ENCODE measurements at regions of chrX and their contacts with region 1.

Region 1: GRCh38 chrX:55160685-55161552 is 59.2 kb upstream of the PAGE5 start:
- DNase-seq: peak; percentile 96
- H3K4me3 Mint-ChIP-seq: peak overlapping the region; percentile 90
- H3K27ac Mint-ChIP-seq: peak overlapping the region; percentile 97
- H3K4me1 Mint-ChIP-seq: peaks cover 10% of the 10 kb centered on the region
- H3K27me3 Mint-ChIP-seq: peaks cover 13% of the 10 kb centered on the region

Region 2: DNA sequence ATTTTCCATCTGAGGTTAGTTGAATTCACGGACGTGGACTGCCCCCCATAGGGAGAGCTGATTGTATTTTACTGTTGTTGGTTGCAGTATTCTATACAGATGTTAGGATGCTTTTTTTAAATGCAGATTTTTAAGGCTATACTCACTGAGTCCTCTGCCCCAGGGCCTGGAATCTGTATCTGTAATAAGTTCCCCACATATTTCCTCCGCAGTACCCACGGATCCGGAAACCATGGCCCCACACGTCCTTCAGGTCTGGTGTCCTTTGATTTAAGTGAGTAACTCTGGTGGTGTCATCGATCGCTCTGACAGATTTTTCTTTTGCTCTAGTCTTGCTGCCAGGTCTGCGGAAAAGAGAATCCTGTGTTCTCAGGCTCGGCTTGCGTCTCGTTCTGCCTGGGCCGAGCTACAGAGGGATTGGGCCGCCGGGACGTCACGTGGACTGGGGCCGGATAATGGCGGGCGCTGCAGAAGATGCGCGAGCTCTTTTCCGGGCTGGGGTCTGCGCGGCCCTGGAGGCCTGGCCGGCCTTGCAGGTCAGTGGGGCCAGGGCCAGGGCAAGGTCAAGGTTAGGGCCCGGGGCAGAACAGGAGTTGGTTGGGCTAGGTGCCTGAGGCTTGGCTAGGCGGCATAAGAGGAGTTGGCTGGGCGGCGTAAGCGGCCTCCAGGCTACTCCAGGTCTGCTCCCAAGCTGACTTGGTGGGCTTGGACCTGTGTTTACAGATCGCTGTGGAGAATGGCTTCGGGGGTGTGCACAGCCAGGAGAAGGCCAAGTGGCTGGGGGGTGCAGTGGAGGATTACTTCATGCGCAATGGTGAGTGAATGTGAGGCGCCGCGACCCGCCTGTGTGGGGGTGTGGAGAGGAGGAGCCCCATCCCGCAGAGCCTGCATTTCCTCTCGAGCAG is 720.7 kb before region 1 on chrX and contains the start of gene TSR2:
- intact Hi-C with region 1: loop called (anchors 5 kb)
- DNase-seq: peak; percentile 93
- H3K4me3 Mint-ChIP-seq: peak within 1 kb of the TSS; percentile 96
- H3K27ac Mint-ChIP-seq: peak within 1 kb of the TSS; percentile 92
- H3K4me1 Mint-ChIP-seq: peaks cover 14% of the 10 kb centered on the region
- H3K27me3 Mint-ChIP-seq: no peaks in the 10 kb centered on the region
- total RNA-seq, gene TSR2: 40.8 and 43.7 TPM in 2 replicates

Region 3: GRCh38 chrX:54999717-55000598 is 161.0 kb before region 1 on chrX and contains the start of gene APEX2:
- intact Hi-C with region 1: loop called (anchors 1 kb)
- DNase-seq: peak; percentile 96
- H3K4me3 Mint-ChIP-seq: peak within 1 kb of the TSS; percentile 97
- H3K27ac Mint-ChIP-seq: peak within 1 kb of the TSS; percentile 87
- H3K4me1 Mint-ChIP-seq: peaks cover 14% of the 10 kb centered on the region
- H3K27me3 Mint-ChIP-seq: no peaks in the 10 kb centered on the region
- total RNA-seq, gene APEX2: 32.2 and 36.1 TPM in 2 replicates

Region 4: DNA sequence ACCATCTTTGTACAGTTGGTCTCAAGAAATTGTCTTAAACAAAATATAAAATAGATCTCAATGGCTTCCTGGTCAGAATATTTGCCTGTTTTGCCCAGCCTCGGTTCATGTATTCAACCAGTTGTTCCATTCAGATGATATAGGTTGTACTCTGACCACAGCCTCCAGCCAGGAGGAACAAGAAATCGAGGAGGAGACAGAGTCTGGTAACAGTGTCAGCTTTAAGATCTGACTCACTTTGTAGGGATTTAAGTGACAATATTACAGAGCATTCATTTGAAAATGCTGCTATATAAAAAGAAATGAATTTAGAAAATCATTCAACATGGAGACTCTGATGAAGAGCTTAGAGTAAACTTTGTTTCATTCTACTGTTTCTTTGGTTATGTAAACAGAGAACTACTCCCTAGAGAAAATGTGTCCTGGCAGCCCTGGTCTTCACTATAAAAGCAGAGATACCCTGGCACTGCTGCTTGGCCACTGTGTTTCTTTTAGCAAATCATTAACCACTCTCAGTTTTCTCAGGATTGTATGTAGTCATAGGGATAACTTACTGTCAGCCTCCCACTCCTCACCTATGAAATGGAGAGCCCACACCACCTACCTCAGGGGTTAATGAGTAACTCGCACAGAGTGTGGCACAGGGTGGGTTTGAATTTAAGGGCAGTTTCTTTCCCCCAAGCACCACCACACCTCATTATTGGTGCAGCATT is 18.6 kb before region 1 on chrX:
- intact Hi-C with region 1: no loop called
- DNase-seq: no peak
- H3K4me3 Mint-ChIP-seq: no peak overlapping the region
- H3K27ac Mint-ChIP-seq: no peak overlapping the region
- H3K4me1 Mint-ChIP-seq: no peaks in the 10 kb centered on the region
- H3K27me3 Mint-ChIP-seq: no peaks in the 10 kb centered on the region

Region 5: DNA sequence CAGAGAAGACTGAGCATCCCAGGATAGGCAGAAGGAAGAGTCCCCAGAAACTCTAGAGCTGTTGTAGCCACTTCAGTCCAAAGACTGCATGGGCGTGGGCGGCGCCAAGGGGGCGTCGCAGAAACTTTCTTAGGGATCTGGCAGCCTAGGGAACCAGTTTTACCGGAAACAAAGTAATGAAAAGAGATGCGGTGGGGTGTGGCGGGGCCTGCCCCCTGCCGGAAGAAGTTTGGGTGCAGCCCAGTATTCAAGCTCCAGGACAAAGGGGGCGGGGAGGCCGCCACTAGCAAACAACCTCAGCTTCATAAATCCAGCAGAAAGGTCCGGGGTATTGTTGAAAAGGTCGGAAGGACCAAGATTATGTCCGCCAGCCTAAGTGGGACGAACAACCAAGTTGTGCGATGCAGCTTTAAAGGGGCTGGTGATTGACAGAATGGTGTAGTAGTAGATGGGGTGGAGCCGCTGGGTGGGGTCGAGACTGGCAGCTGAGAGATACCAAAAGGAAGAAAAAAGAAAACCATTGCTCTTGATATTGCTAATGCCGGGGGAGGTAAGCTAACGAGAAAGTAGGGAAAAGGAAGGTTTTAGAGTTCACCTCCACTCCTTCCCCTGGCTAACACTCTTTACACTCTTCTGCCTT is 747.2 kb after region 1 on chrX:
- intact Hi-C with region 1: loop called (anchors 5 kb)
- DNase-seq: peak; percentile 82
- H3K4me3 Mint-ChIP-seq: peak overlapping the region; percentile 93
- H3K27ac Mint-ChIP-seq: peak overlapping the region; percentile 92
- H3K4me1 Mint-ChIP-seq: peaks cover 23% of the 10 kb centered on the region
- H3K27me3 Mint-ChIP-seq: no peaks in the 10 kb centered on the region

Measured in activated CD4-positive, alpha-beta T cell treated with anti-CD3 and anti-CD28 coated beads, Interleukin-2, amount 10 ng/mL, durations not matched to agents 24 days and 14 days (primary cell).